A673 (cell line): ENCODE measurements at regions of chr15 and their contacts with region 1.

Region 1: DNA sequence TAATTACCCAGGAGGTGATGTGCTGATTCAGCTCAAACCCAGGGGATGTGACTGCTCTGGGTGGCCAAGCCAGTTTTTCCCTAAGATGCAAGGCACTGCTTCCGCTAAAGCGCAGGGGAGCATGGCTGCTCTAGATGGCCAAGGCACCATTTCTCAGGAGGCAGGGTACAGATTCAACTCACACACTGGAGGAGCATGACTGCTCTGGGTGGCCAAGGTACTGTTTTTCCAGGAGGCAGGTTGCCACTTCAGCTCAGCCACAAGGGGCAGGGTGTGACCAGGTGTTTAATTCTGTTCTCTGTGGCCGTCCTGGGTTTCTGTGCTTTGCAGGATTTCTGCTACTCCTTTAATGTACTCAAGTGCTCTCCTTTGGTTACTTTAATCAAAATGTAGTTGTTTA is 659.3 kb upstream of the ARRDC4 start:
- DNase-seq: no peak
- H3K4me3 ChIP-seq: no peak overlapping the region
- H3K27ac ChIP-seq: no peak overlapping the region
- H3K4me1 ChIP-seq: no peaks in the 10 kb centered on the region
- H3K27me3 ChIP-seq: no peaks in the 10 kb centered on the region
- CTCF ChIP-seq: no peak

Region 2: DNA sequence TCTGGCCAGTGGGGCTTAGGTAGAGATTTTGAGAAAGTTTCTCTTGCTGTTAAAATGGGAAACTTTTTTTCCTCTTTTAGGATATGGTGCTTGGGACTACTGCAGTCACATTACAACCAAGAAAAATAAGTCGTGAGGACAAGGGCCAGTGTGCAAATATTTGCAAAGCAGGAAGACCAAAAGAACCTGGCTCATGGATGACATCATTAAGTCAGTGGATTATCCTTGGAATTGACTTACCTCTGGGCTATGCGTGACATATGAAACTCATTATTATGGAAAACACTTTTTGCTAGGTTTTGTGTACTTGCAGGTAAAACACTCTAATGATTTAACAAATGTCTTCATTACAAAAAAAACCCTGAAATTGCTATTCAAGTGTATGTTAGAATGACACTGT is 368.5 kb before region 1 on chr15:
- CTCF ChIA-PET with region 1: no interaction called
- POLR2A ChIA-PET with region 1: no interaction called
- intact Hi-C with region 1: no loop called
- DNase-seq: no peak
- H3K4me3 ChIP-seq: no peak overlapping the region
- H3K27ac ChIP-seq: no peak overlapping the region
- H3K4me1 ChIP-seq: no peaks in the 10 kb centered on the region
- H3K27me3 ChIP-seq: no peaks in the 10 kb centered on the region
- CTCF ChIP-seq: no peak

Region 3: DNA sequence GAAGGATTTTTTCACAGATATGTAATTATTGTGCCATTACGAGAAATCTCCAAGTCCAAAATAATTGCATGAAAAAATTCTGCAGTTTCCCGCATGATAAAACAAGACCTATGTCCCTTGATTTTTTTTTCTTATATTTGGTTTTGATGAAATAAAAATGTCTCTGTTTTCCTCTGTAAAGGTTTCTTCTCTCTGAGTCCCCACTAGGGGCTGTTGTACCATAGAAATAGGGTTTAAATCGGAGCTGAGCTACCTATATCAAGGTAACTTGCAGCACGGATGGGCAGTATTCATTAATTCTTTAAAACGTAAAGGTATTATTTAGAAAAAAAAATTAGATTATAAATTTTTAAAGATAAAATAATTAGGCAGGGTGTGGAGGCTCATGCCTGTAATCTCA is 1280.5 kb after region 1 on chr15:
- CTCF ChIA-PET with region 1: interaction called, 10 read pairs
- POLR2A ChIA-PET with region 1: no interaction called
- intact Hi-C with region 1: no loop called
- DNase-seq: no peak
- H3K4me3 ChIP-seq: no peak overlapping the region
- H3K27ac ChIP-seq: no peak overlapping the region
- H3K4me1 ChIP-seq: no peaks in the 10 kb centered on the region
- H3K27me3 ChIP-seq: peaks cover 63% of the 10 kb centered on the region
- CTCF ChIP-seq: peak; percentile 39; the same call in 1 of the 2 replicates